ENCODE measurements at regions of chr3 and their contacts with region 1.

Region 1: DNA sequence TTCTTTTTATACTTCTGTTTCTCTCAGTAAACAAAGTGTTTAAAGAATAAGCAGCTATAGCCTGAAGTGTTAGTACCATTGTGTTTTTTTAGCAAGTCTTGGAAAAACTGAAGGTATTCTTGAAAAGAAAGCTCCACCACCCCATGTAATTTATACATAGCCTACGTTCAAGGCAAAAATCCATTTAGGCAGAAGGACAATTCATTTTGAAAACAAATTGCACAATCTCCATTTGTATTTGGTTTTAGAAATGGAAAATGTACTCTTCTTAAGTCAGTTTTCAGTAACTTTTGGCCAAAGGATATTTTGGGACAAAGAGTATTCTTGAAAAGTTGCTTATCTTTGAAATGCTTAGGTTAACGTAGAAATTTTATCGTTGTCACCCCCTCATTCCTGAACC is 34.5 kb downstream of the PTPRG start:
- DNase-seq: no peak
- H3K4me3 Mint-ChIP-seq: no peak overlapping the region
- H3K27ac Mint-ChIP-seq: no peak overlapping the region
- H3K4me1 Mint-ChIP-seq: no peaks in the 10 kb centered on the region
- H3K27me3 Mint-ChIP-seq: peaks cover 1% of the 10 kb centered on the region

Region 2: DNA sequence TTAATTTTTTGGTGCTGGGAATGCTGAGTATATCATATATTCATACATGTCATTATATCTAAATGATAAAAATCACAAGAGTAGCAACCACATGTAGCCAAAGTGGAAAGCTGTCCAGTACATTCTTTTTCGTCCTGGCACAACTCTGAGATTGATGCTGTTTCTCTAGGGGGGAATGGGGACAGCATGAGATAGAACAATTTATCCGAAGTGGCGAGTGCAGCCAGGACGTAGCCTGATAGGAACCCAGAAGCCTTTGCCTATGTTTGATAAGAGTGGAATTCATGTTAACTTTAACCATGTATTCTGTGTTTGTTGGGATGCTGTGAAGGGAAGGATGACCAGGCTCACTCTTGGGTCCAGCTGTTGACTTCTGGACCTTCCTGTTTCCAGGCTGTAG is 13.5 kb before region 1 on chr3:
- intact Hi-C with region 1: loop called (anchors 1 kb)
- DNase-seq: no peak
- H3K4me3 Mint-ChIP-seq: no peak overlapping the region
- H3K27ac Mint-ChIP-seq: no peak overlapping the region
- H3K4me1 Mint-ChIP-seq: no peaks in the 10 kb centered on the region
- H3K27me3 Mint-ChIP-seq: peaks cover 9% of the 10 kb centered on the region

Measured in activated T-helper 2 cell treated with anti-CD3 and anti-CD28 coated beads, Interferon-gamma antibody, Interleukin-2, Interleukin-4, amounts not matched to agents 10 μg/mL and 5 μg/mL and 100 μg/mL, durations not matched to agents 14 hours and 24 hours and 36 hours (primary cell).